Activated CD4-positive, alpha-beta memory T cell treated with anti-CD3 and anti-CD28 coated beads for 36 hours (primary cell): ENCODE measurements at regions of chr7 and their contacts with region 1.

Region 1: GRCh38 chr7:7719236-7719635 is 829 bp upstream of the RPA3 start:
- DNase-seq: peak; percentile 62
- H3K4me3 Mint-ChIP-seq: peak overlapping the region; percentile 8
- H3K27ac Mint-ChIP-seq: peak overlapping the region; percentile 45
- H3K4me1 Mint-ChIP-seq: peaks cover 17% of the 10 kb centered on the region
- H3K27me3 Mint-ChIP-seq: no peaks in the 10 kb centered on the region

Region 2: GRCh38 chr7:7640221-7641128 is 78.8 kb before region 1 on chr7 and contains the start of gene UMAD1:
- CTCF ChIA-PET with region 1: no interaction called
- POLR2A ChIA-PET with region 1: interaction called, 8 read pairs
- intact Hi-C with region 1: loop called (anchors 2 kb)
- DNase-seq: peak; percentile 99
- H3K4me3 Mint-ChIP-seq: peak within 1 kb of the TSS; percentile 97
- H3K27ac Mint-ChIP-seq: peak within 1 kb of the TSS; percentile 100
- H3K4me1 Mint-ChIP-seq: peaks cover 45% of the 10 kb centered on the region
- H3K27me3 Mint-ChIP-seq: peaks cover 1% of the 10 kb centered on the region
- total RNA-seq, gene UMAD1: 15.0 to 17.6 TPM

Region 3: GRCh38 chr7:7672545-7673239 is 46.5 kb before region 1 on chr7:
- CTCF ChIA-PET with region 1: no interaction called
- POLR2A ChIA-PET with region 1: no interaction called
- intact Hi-C with region 1: loop called (anchors 1 kb)
- DNase-seq: peak; percentile 49
- H3K4me3 Mint-ChIP-seq: peak overlapping the region; percentile 11
- H3K27ac Mint-ChIP-seq: peak overlapping the region; percentile 67
- H3K4me1 Mint-ChIP-seq: peaks cover 39% of the 10 kb centered on the region
- H3K27me3 Mint-ChIP-seq: no peaks in the 10 kb centered on the region

Region 4: DNA sequence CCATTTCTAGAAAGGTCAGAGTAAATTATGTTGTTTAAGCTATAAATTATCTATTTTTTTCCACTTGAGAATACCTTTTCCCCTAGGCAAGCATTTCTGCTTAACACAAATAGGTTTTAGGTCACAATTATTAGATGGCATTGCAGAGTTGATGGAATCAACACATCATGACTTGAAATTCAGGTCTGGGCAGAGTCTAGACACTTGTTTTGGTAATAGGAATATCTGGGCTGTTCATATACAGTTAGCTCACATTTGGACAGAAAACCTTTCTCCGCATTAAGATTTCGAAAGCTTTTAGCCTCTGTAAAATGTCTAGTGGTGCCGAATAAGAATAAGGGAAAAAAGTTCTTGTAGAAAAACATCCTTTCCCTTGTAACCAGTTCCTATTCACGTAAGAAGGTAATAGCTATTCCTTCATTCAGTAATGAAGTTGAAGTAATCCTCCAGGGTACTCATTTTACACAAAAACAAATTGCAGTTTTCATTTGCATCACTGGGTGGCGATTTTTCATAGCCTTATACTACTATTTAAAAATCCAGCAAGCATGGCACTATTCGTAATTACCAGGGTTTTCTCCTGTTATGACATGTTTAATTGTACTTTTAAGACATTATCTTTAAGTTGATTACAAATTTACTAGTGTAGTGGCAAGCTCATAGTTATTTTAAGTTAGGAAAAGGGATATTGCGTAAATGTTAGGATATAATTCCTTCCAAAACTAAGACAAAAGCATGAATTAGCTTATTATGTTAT is 37.9 kb before region 1 on chr7:
- CTCF ChIA-PET with region 1: interaction called, 14 read pairs
- POLR2A ChIA-PET with region 1: interaction called, 4 read pairs
- intact Hi-C with region 1: loop called (anchors 2 kb)
- DNase-seq: no peak
- H3K4me3 Mint-ChIP-seq: no peak overlapping the region
- H3K27ac Mint-ChIP-seq: peak overlapping the region; percentile 52
- H3K4me1 Mint-ChIP-seq: peaks cover 30% of the 10 kb centered on the region
- H3K27me3 Mint-ChIP-seq: no peaks in the 10 kb centered on the region

Region 5: GRCh38 chr7:7830122-7830878 is 111.1 kb after region 1 on chr7:
- CTCF ChIA-PET with region 1: no interaction called
- POLR2A ChIA-PET with region 1: no interaction called
- intact Hi-C with region 1: loop called (anchors 5 kb)
- DNase-seq: no peak
- H3K4me3 Mint-ChIP-seq: no peak overlapping the region
- H3K27ac Mint-ChIP-seq: peak overlapping the region; percentile 5
- H3K4me1 Mint-ChIP-seq: peaks cover 11% of the 10 kb centered on the region
- H3K27me3 Mint-ChIP-seq: no peaks in the 10 kb centered on the region

Region 6: DNA sequence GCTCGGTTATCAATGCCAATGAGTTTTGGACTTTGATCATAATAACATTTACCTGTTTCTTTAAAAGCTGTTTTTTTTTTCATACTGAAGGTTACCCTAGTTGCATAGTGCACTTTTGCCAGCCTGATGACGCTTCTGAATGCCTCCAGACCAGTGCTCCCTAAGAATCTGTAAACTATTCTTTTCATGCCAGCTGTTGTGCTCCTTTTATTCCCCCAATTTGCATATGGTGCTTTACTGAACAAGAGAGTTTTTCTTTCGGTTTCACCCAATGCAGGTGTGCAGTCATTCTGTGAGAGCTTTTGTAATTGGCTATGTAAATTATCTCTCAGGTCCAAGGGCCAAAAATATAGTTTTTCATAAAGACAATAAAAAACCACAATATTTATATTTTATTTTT is 201.2 kb after region 1 on chr7:
- CTCF ChIA-PET with region 1: no interaction called
- POLR2A ChIA-PET with region 1: no interaction called
- intact Hi-C with region 1: loop called (anchors 1 kb)
- DNase-seq: peak; percentile 32
- H3K4me3 Mint-ChIP-seq: peak overlapping the region; percentile 55
- H3K27ac Mint-ChIP-seq: no peak overlapping the region
- H3K4me1 Mint-ChIP-seq: peaks cover 41% of the 10 kb centered on the region
- H3K27me3 Mint-ChIP-seq: no peaks in the 10 kb centered on the region

Region 7: GRCh38 chr7:7944619-7945282 is 225.5 kb after region 1 on chr7:
- CTCF ChIA-PET with region 1: no interaction called
- POLR2A ChIA-PET with region 1: no interaction called
- intact Hi-C with region 1: loop called (anchors 1 kb)
- DNase-seq: peak; percentile 84
- H3K4me3 Mint-ChIP-seq: peak overlapping the region; percentile 71
- H3K27ac Mint-ChIP-seq: peak overlapping the region; percentile 89
- H3K4me1 Mint-ChIP-seq: peaks cover 26% of the 10 kb centered on the region
- H3K27me3 Mint-ChIP-seq: no peaks in the 10 kb centered on the region